ENCODE measurements at regions of chr12 and their contacts with region 1.

Region 1: GRCh38 chr12:71415336-71416231 is 24.0 kb upstream of the LGR5 start:
- DNase-seq: no peak
- H3K4me3 ChIP-seq: no peak overlapping the region
- H3K27me3 ChIP-seq: 0 out of 2 replicates have a peak, but pooled peaks cover 2% of the 10 kb centered on the region
- CTCF ChIP-seq: peak; percentile 76

Region 2: GRCh38 chr12:70557583-70558191 is 857.9 kb before region 1 on chr12:
- CTCF ChIA-PET with region 1: no interaction called
- POLR2A ChIA-PET with region 1: no interaction called
- DNase-seq: no peak
- H3K4me3 ChIP-seq: no peak overlapping the region
- H3K27me3 ChIP-seq: no peaks in the 10 kb centered on the region
- CTCF ChIP-seq: no peak

Region 3: GRCh38 chr12:71400481-71400880 is 15.1 kb before region 1 on chr12:
- CTCF ChIA-PET with region 1: interaction called, 28 read pairs
- POLR2A ChIA-PET with region 1: no interaction called
- DNase-seq: no peak
- H3K4me3 ChIP-seq: no peak overlapping the region
- H3K27me3 ChIP-seq: peaks cover 10% of the 10 kb centered on the region
- CTCF ChIP-seq: no peak

Region 4: GRCh38 chr12:71551529-71551928 is 135.9 kb after region 1 on chr12:
- CTCF ChIA-PET with region 1: interaction called, 65 read pairs
- POLR2A ChIA-PET with region 1: no interaction called
- DNase-seq: no peak
- H3K4me3 ChIP-seq: no peak overlapping the region
- H3K27me3 ChIP-seq: no peaks in the 10 kb centered on the region; the same call in 1 of the 2 replicates
- CTCF ChIP-seq: peak; percentile 41; the same call in 1 of the 2 replicates

Region 5: GRCh38 chr12:71746983-71747611 is 331.5 kb after region 1 on chr12:
- CTCF ChIA-PET with region 1: interaction called, 54 read pairs
- POLR2A ChIA-PET with region 1: no interaction called
- DNase-seq: no peak
- H3K4me3 ChIP-seq: no peak overlapping the region
- H3K27me3 ChIP-seq: peaks cover 5% of the 10 kb centered on the region
- CTCF ChIP-seq: peak; percentile 68